OCI-LY7 (cell line): ENCODE measurements at regions of chr1 and their contacts with region 1.

Region 1: DNA sequence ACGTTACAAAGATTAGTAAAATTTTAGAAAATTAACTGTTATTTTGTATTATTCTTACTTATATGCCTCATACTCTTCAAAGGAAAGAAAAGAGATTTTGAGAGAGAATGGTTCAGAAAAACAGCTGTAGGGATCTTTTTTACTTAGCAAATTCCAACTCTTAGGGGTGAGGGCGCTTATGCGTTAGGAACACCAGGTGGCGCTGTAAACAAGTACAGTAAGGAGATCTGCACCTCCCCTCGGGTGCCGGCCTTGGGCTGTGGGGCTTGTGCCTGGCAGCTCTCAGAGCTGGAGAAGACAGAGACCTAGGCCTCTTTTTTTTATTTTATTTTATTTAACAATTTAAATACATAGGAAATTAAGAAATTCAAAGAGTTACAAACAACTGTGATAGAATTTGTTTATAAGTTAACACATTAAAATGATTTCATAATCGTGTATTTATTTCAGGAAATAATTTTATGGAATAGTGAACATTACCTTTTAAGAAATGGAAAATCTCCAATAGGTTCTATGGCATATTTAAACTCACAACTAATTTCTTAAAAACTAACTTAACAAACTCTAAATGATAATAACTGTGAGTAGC is 32.6 kb downstream of the UTP25 start:
- DNase-seq: peak; percentile 79
- H3K4me3 ChIP-seq: no peak overlapping the region
- H3K27ac ChIP-seq: no peak overlapping the region
- H3K4me1 ChIP-seq: no peaks in the 10 kb centered on the region
- CTCF ChIP-seq: peak; percentile 97

Region 2: GRCh38 chr1:209884665-209885117 is 24.3 kb after region 1 on chr1:
- CTCF ChIA-PET with region 1: no interaction called
- POLR2A ChIA-PET with region 1: no interaction called
- intact Hi-C with region 1: no loop called
- DNase-seq: no peak
- H3K4me3 ChIP-seq: no peak overlapping the region
- H3K27ac ChIP-seq: no peak overlapping the region
- H3K4me1 ChIP-seq: no peaks in the 10 kb centered on the region
- CTCF ChIP-seq: no peak

Region 3: DNA sequence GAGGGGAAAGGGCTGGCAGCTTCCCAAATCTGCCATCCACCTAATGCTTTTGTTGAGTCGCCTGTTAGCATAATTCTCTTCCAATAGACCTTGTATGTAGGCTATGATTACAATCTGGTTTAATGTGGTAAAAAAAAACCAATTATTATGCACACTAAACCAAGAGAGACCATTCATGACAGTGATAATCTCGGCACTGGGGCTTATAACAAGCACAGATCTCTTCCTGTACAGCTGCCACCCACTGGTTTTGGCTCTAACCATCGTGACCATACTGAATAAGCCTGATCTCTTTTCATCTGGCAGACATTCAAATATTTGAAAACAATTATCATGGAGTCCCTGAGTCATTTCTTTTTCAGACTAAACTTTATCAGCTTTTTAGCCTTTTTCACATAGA is 65.7 kb after region 1 on chr1:
- CTCF ChIA-PET with region 1: no interaction called
- POLR2A ChIA-PET with region 1: no interaction called
- intact Hi-C with region 1: no loop called
- DNase-seq: no peak
- H3K4me3 ChIP-seq: no peak overlapping the region
- H3K27ac ChIP-seq: no peak overlapping the region
- H3K4me1 ChIP-seq: no peaks in the 10 kb centered on the region
- CTCF ChIP-seq: no peak

Region 4: GRCh38 chr1:209989525-209989924 is 129.1 kb after region 1 on chr1:
- CTCF ChIA-PET with region 1: no interaction called
- POLR2A ChIA-PET with region 1: no interaction called
- intact Hi-C with region 1: loop called (anchors 2 kb)
- DNase-seq: peak; percentile 3
- H3K4me3 ChIP-seq: no peak overlapping the region
- H3K27ac ChIP-seq: no peak overlapping the region
- H3K4me1 ChIP-seq: no peaks in the 10 kb centered on the region
- CTCF ChIP-seq: peak; percentile 61; the same call in 1 of the 2 replicates